ENCODE measurements at regions of chr18 and their contacts with region 1.

Region 1: GRCh38 chr18:21704603-21705364 is at the start of gene ABHD3:
- DNase-seq: peak; percentile 93
- H3K4me3 Mint-ChIP-seq: peak within 1 kb of the TSS; percentile 96
- H3K27ac Mint-ChIP-seq: peak within 1 kb of the TSS; percentile 97
- H3K4me1 Mint-ChIP-seq: peaks cover 41% of the 10 kb centered on the region
- H3K27me3 Mint-ChIP-seq: no peaks in the 10 kb centered on the region
- total RNA-seq, gene ABHD3: 53.4 to 57.6 TPM

Region 2: GRCh38 chr18:21612125-21612991 is 92.4 kb before region 1 on chr18 and contains the start of gene SNRPD1:
- CTCF ChIA-PET with region 1: interaction called, 3 read pairs
- POLR2A ChIA-PET with region 1: interaction called, 12 read pairs
- DNase-seq: peak; percentile 88
- H3K4me3 Mint-ChIP-seq: peak within 1 kb of the TSS; percentile 98
- H3K27ac Mint-ChIP-seq: peak within 1 kb of the TSS; percentile 100
- H3K4me1 Mint-ChIP-seq: peaks cover 35% of the 10 kb centered on the region
- H3K27me3 Mint-ChIP-seq: no peaks in the 10 kb centered on the region
- total RNA-seq, gene SNRPD1: 69.7 to 101 TPM

Region 3: GRCh38 chr18:21693322-21693721 is 11.5 kb before region 1 on chr18:
- CTCF ChIA-PET with region 1: interaction called, 10 read pairs
- POLR2A ChIA-PET with region 1: no interaction called
- DNase-seq: no peak
- H3K4me3 Mint-ChIP-seq: no peak overlapping the region
- H3K27ac Mint-ChIP-seq: no peak overlapping the region
- H3K4me1 Mint-ChIP-seq: peaks cover 6% of the 10 kb centered on the region
- H3K27me3 Mint-ChIP-seq: no peaks in the 10 kb centered on the region

Region 4: GRCh38 chr18:21798126-21798525 is 93.3 kb after region 1 on chr18:
- CTCF ChIA-PET with region 1: no interaction called
- POLR2A ChIA-PET with region 1: no interaction called
- DNase-seq: no peak
- H3K4me3 Mint-ChIP-seq: no peak overlapping the region
- H3K27ac Mint-ChIP-seq: no peak overlapping the region
- H3K4me1 Mint-ChIP-seq: no peaks in the 10 kb centered on the region
- H3K27me3 Mint-ChIP-seq: no peaks in the 10 kb centered on the region